ENCODE measurements at regions of chr7 and their contacts with region 1.

Region 1: GRCh38 chr7:91683823-91684222 is 196.7 kb downstream of the MTERF1 start:
- DNase-seq: no peak

Region 2: DNA sequence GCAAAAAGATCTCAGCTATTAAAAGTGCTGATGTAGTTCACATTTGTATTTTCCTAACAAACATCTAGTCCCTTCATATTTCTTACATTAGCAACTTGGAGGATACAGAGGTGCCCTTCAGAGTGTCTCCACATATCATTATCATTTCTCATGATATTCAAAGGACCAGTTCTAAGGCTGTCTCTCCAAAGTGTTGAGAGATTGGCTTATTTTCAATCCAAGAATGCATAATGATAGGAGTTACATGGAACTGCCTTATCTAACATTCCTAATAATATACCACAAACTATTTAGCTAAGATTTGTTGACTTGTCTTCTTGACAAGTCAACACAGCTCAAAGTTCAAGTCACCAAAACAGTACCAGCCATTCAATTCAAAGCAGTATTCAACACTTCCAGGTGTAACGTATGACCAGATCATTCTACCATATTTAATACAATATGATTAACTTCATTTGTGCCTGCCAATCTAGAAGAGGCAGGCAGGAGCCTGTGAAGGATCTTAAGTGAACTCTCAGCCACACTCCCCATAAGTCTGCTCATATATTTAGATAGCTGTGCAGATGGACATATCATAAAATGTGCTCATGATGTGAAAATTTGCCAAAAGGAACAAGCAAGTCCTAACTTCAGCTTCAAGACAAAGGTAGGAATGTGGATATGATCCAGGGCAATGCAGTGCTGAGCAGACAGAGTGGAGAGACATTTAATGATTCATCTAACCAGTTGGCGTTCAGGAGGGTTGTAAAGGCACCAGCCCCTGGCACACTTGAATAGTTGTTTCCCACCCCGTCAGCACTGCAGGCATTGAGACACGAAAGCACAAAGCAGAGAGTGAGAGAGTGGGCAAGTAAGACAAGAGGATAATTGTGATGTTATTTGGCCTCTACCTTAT is 88.3 kb after region 1 on chr7:
- intact Hi-C with region 1: loop called (anchors 10 kb)
- DNase-seq: no peak

Measured in cardiac septum (tissue), 1 donor.